ENCODE measurements at regions of chr17 and their contacts with region 1.

Region 1: GRCh38 chr17:77382966-77383612 is 242.3 kb downstream of the SEC14L1 start:
- DNase-seq: no peak
- ATAC-seq: no peak
- H3K4me3 ChIP-seq: peak overlapping the region; percentile 30 to 34
- H3K4me3 Mint-ChIP-seq: peak overlapping the region; percentile 75
- H3K27ac ChIP-seq: peak overlapping the region in 1 of 2 experiments; percentile 40
- H3K27ac Mint-ChIP-seq: peak overlapping the region; percentile 91
- H3K4me1 ChIP-seq: peaks cover 95% of the 10 kb centered on the region
- H3K4me1 Mint-ChIP-seq: peaks cover 89% of the 10 kb centered on the region
- H3K27me3 ChIP-seq: no peaks in the 10 kb centered on the region
- H3K27me3 Mint-ChIP-seq: no peaks in the 10 kb centered on the region
- CTCF ChIP-seq: no peak

Region 2: DNA sequence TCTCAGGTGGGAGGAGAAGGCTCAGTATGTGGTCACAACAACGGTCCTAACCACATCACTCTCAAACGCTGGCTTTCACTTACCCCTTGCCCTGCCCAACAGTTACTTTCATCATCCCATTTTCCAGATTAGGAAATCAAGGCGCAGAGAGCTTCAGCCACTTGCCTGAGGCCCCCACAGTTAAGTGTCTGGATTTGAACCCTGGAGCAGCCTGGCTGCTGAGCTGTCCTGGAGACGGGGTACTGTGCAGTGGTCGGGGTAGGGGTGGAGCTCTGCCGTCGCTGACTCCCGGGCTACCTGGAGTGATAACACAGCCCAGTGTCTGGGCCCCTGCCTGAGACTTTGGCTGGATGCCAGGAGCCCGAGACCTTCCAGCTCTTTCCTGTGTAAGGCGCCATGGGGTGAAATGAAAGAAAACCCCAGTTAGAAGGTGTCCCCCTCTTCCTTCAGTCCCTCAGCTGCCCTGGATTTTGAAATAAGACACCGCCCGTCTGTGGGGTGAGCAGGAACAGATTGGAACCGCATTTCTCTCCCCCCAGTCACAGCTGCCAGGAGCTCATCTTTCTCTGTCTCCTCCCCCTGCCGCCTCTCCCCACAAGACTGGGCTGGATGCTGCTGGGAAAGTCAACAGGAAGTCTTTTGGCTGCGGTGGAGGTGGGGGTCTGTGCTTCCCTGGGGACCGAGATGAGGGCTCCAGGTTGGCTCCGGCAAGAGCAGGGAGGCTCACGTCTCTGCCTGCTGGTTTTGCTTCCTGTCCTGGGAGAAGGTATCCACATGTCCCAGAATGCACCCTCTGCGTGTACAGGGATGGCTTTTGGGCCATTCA is 37.9 kb after region 1 on chr17:
- CTCF ChIA-PET with region 1: interaction called, 3 read pairs
- POLR2A ChIA-PET with region 1: interaction called, 11 read pairs
- intact Hi-C with region 1: no loop called
- DNase-seq: peak in 8 of 9 experiments; percentile 39 to 79 (median 70)
- ATAC-seq: peak; percentile 62
- H3K4me3 ChIP-seq: peak overlapping the region; percentile 12 to 28
- H3K4me3 Mint-ChIP-seq: peak overlapping the region; percentile 65
- H3K27ac ChIP-seq: peak overlapping the region; percentile 22 to 57
- H3K27ac Mint-ChIP-seq: peak overlapping the region; percentile 91
- H3K4me1 ChIP-seq: peaks cover 75% of the 10 kb centered on the region
- H3K4me1 Mint-ChIP-seq: peaks cover 67% of the 10 kb centered on the region
- H3K27me3 ChIP-seq: no peaks in the 10 kb centered on the region
- H3K27me3 Mint-ChIP-seq: no peaks in the 10 kb centered on the region
- CTCF ChIP-seq: no peak